HEK293T (cell line): ENCODE measurements at regions of chr6 and their contacts with region 1.

Region 1: GRCh38 chr6:41318654-41319565 is 16.5 kb upstream of the NCR2 start:
- DNase-seq: peak; percentile 88

Region 2: DNA sequence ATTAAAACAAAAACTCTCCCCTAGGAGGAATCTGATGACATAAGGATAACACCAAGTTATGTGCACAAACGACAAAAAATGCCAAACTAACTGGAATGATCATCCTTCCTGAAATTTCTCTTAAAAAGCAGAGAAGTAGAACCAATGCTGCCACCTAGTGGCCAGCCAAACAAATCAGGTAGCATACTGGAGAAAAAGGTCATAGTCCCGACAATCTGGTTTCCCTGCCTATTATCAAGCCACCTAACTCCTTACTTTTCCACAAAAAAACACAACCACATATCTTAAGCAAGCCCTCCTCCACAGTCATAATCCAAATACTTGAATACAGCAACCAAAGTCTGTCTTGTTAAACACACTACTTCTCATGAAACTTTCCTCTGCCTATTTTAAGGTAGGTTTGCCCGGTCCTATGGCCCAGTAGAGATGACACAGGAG is 252.0 kb before region 1 on chr6:
- CTCF ChIA-PET with region 1: no interaction called
- POLR2A ChIA-PET with region 1: no interaction called
- DNase-seq: peak; percentile 47

Region 3: DNA sequence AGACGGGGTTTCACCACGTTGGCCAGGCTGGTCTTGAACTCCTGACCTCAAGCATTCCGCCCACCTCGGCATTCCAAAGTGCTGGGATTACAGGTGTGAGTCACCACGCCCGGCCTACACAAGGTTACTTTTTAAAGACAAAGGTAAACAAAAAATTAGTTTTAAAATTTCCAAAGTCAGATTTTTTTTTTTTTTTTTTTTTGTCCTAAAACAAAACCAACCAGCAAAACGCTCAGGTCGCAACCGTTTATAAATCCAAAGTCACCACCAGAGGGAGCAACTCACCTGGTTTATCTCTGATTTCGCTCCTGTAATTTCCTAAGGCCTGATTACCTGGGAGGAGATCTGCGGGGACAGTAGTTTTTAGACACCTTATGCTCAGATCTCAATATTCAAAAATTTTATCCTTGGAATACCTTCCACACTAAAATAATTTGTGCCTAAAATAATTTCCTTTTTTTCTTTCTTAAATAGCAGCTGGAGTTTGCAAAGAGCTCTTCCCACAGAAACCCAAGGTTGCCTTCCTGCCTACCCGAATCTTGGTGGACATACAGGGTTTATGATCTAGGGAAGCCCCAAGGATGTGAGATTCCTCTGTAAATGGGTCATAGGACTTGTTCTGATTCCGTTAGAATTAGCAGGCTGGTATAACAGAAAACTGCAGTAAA is 12.6 kb before region 1 on chr6:
- CTCF ChIA-PET with region 1: interaction called, 31 read pairs
- POLR2A ChIA-PET with region 1: no interaction called
- DNase-seq: peak; percentile 51